ENCODE measurements at regions of chr5 and their contacts with region 1.

Region 1: GRCh38 chr5:41270423-41271251 is 57.3 kb upstream of the C6 start:
- DNase-seq: peak; percentile 46 to 60
- H3K4me3 ChIP-seq: no peak overlapping the region
- H3K4me3 Mint-ChIP-seq: no peak overlapping the region
- H3K27ac Mint-ChIP-seq: no peak overlapping the region
- H3K4me1 ChIP-seq: no peaks in the 10 kb centered on the region
- H3K4me1 Mint-ChIP-seq: no peaks in the 10 kb centered on the region
- H3K27me3 ChIP-seq: no peaks in the 10 kb centered on the region
- H3K27me3 Mint-ChIP-seq: no peaks in the 10 kb centered on the region
- CTCF ChIP-seq: peak; percentile 76 to 82

Region 2: DNA sequence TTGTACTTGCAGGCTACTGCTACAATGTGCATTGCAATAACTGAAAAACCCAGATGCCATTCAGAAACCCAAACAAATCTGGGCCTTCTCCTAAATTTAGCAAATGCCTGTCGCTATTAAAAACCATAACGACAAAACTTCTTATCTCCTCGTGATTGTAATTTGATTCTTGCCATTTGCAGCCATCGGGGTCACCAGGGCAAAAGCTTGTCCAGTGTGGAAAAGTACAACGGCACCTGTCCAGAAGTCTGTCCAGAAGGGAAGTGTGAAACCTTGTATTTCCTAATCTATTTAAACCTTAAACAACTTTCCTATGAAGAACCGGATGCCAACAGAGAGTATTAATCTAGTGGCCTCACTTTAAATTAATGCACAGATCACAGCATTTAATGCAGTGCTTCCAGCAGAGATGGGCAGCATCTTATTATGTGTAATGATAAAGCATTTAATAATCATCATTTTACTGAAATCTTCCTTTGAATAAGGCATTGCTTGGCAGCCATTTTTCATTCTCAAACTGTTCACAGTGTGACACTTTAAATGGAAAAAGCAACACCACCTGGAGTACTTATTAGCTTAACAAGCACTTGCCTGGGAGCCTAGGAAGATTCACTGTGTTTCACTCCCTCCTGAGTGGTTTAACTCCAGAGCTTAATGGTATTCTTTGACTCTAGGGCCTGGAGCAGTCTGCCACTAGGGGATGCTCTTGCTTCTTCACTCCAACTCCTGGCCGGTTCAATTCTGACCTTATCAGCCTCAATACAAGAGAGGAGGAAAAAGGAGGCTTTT is 366.2 kb before region 1 on chr5:
- CTCF ChIA-PET with region 1: no interaction called
- POLR2A ChIA-PET with region 1: no interaction called
- intact Hi-C with region 1: loop called (anchors 1 kb)
- DNase-seq: peak; percentile 57 to 61
- H3K4me3 ChIP-seq: no peak overlapping the region
- H3K4me3 Mint-ChIP-seq: no peak overlapping the region
- H3K27ac Mint-ChIP-seq: no peak overlapping the region
- H3K4me1 ChIP-seq: no peaks in the 10 kb centered on the region
- H3K4me1 Mint-ChIP-seq: peaks cover 9% of the 10 kb centered on the region
- H3K27me3 ChIP-seq: no peaks in the 10 kb centered on the region
- H3K27me3 Mint-ChIP-seq: peaks cover 5% of the 10 kb centered on the region
- CTCF ChIP-seq: peak; percentile 80 to 97

Region 3: DNA sequence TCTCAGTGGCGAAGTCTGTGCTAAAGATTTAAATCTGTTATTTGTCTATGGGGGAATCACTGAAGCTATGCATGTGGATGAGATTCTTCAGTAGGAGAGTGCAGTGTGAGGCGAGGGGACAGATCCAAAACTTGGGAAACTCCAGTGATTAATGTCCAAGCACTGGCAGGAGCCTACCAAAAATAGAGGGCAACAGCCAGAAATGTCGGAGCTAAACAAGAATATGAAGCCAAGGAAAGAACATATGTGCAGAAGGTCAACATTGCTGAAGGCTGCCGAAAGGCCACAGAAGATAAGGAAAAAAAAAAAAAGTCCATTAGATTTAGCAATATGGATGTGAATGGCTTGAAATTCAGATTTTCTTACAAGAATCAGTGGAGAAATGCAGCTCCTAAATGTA is 119.1 kb before region 1 on chr5:
- CTCF ChIA-PET with region 1: no interaction called
- POLR2A ChIA-PET with region 1: no interaction called
- intact Hi-C with region 1: no loop called
- DNase-seq: no peak
- H3K4me3 ChIP-seq: no peak overlapping the region
- H3K4me3 Mint-ChIP-seq: no peak overlapping the region
- H3K27ac Mint-ChIP-seq: no peak overlapping the region
- H3K4me1 ChIP-seq: no peaks in the 10 kb centered on the region
- H3K4me1 Mint-ChIP-seq: no peaks in the 10 kb centered on the region
- H3K27me3 ChIP-seq: no peaks in the 10 kb centered on the region
- H3K27me3 Mint-ChIP-seq: peaks cover 13% of the 10 kb centered on the region
- CTCF ChIP-seq: no peak

Region 4: GRCh38 chr5:41334758-41335157 is 64.1 kb after region 1 on chr5:
- CTCF ChIA-PET with region 1: no interaction called
- POLR2A ChIA-PET with region 1: no interaction called
- intact Hi-C with region 1: loop called (anchors 5 kb)
- DNase-seq: no peak
- H3K4me3 ChIP-seq: no peak overlapping the region
- H3K4me3 Mint-ChIP-seq: no peak overlapping the region
- H3K27ac Mint-ChIP-seq: no peak overlapping the region
- H3K4me1 ChIP-seq: no peaks in the 10 kb centered on the region
- H3K4me1 Mint-ChIP-seq: no peaks in the 10 kb centered on the region
- H3K27me3 ChIP-seq: no peaks in the 10 kb centered on the region
- H3K27me3 Mint-ChIP-seq: no peaks in the 10 kb centered on the region
- CTCF ChIP-seq: no peak

Region 5: GRCh38 chr5:41408676-41409443 is 138.2 kb after region 1 on chr5:
- CTCF ChIA-PET with region 1: interaction called, 3 read pairs
- POLR2A ChIA-PET with region 1: no interaction called
- intact Hi-C with region 1: loop called (anchors 2 kb)
- DNase-seq: peak in 1 of 2 experiments; percentile 4
- H3K4me3 ChIP-seq: no peak overlapping the region
- H3K4me3 Mint-ChIP-seq: no peak overlapping the region
- H3K27ac Mint-ChIP-seq: peak overlapping the region; percentile 33
- H3K4me1 ChIP-seq: peaks cover 56% of the 10 kb centered on the region
- H3K4me1 Mint-ChIP-seq: peaks cover 42% of the 10 kb centered on the region
- H3K27me3 ChIP-seq: no peaks in the 10 kb centered on the region
- H3K27me3 Mint-ChIP-seq: no peaks in the 10 kb centered on the region
- CTCF ChIP-seq: no peak

Region 6: GRCh38 chr5:41519801-41520200 is 249.2 kb after region 1 on chr5:
- CTCF ChIA-PET with region 1: interaction called, 4 read pairs
- POLR2A ChIA-PET with region 1: no interaction called
- intact Hi-C with region 1: loop called (anchors 1 kb)
- DNase-seq: peak in 1 of 2 experiments; percentile 7
- H3K4me3 ChIP-seq: no peak overlapping the region
- H3K4me3 Mint-ChIP-seq: no peak overlapping the region
- H3K27ac Mint-ChIP-seq: no peak overlapping the region
- H3K4me1 ChIP-seq: peaks cover 9% of the 10 kb centered on the region
- H3K4me1 Mint-ChIP-seq: peaks cover 7% of the 10 kb centered on the region
- H3K27me3 ChIP-seq: no peaks in the 10 kb centered on the region
- H3K27me3 Mint-ChIP-seq: no peaks in the 10 kb centered on the region
- CTCF ChIP-seq: peak in 1 of 2 experiments; percentile 26

Region 7: DNA sequence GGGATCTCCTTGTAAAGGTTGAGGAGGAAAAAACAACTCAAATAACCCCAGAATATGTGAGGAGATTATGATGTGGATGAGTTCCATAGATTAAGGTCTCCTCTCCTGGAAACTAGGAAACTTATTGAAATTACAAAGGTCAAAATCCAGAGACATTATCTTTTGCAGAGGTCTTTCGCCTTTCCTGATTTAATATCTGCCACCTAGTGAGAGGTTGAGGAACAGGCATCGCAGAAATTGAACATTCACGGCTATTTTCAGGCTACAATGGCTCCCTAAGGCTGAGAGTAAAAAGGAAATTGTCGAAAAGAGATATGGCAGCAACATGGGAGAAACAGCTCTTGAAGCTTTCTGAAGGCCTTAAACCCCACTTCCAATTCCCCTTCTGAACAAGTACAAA is 367.2 kb after region 1 on chr5:
- CTCF ChIA-PET with region 1: interaction called, 9 read pairs
- POLR2A ChIA-PET with region 1: no interaction called
- intact Hi-C with region 1: loop called (anchors 1 kb)
- DNase-seq: no peak
- H3K4me3 ChIP-seq: no peak overlapping the region
- H3K4me3 Mint-ChIP-seq: no peak overlapping the region
- H3K27ac Mint-ChIP-seq: peak overlapping the region; percentile 7
- H3K4me1 ChIP-seq: peaks cover 32% of the 10 kb centered on the region
- H3K4me1 Mint-ChIP-seq: peaks cover 13% of the 10 kb centered on the region
- H3K27me3 ChIP-seq: no peaks in the 10 kb centered on the region
- H3K27me3 Mint-ChIP-seq: no peaks in the 10 kb centered on the region
- CTCF ChIP-seq: peak in 1 of 2 experiments; percentile 15

Region 8: DNA sequence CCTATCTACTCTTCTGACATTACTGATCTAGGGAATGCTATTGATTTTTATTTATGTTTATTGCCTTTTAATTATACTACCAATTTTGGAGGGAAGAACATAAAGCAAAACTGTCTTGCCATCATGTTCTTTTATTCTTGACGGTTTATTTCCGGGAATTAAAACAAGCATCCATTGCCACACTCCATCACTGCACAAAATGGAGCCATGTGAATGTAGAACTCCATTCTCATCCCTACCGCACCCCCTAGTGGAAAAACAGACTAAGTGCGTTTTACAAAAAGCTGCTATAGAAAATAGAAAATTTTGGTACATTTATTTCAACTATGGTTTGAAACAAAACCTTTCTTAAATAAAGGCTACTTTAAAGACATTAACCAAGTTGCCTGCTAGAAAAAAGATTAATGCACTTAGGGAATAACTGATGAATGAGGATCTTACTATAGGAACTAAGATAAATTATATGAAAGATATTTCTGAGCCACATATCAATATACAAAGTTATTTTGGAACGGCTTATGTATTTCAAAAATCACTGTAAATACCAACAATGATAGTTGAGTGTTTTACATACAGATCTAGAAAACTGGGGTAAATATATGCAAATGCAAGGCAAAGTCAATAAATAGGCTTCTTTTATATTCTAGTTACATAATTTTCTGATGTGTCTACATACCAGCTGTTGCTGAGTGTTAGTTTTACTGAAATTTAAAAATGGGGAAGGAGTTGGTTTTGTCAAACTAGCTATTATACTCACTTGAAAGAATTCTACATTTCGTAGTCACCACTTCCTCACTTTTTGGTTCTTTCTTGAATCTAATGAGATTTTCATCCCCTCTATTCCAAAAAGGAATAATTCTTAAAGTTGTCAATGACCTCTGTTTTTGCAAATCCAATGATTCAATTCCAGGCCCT is 573.1 kb after region 1 on chr5:
- CTCF ChIA-PET with region 1: interaction called, 3 read pairs
- POLR2A ChIA-PET with region 1: no interaction called
- intact Hi-C with region 1: loop called (anchors 1 kb)
- DNase-seq: peak; percentile 42 to 69
- H3K4me3 ChIP-seq: no peak overlapping the region
- H3K4me3 Mint-ChIP-seq: no peak overlapping the region
- H3K27ac Mint-ChIP-seq: no peak overlapping the region
- H3K4me1 ChIP-seq: no peaks in the 10 kb centered on the region
- H3K4me1 Mint-ChIP-seq: no peaks in the 10 kb centered on the region
- H3K27me3 ChIP-seq: no peaks in the 10 kb centered on the region
- H3K27me3 Mint-ChIP-seq: no peaks in the 10 kb centered on the region
- CTCF ChIP-seq: peak; percentile 79 to 80

Measured in Caco-2 (cell line).